ENCODE measurements at regions of chr10 and their contacts with region 1.

Region 1: DNA sequence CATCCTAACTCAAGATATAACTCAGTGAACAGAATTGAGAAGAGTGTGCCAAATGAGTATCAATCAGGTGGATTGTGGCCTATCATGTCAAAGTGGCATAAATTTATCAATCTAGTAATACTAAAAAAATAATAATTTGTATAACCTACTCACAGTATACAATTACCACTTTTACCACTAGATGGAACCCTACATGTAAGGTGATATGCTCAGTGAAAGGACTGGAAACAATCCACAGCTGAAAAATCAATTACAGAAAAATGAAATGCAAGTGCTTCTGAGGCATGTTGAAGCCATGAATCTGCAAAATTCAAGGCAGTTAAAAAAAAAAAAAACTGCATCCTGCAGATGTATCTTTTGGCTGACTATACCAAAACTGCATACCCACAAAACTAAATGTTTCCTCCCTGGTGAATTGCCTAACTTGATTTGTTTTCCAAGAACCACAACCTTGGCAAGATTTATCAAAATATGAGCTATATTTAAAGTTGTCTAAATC is 13.9 kb downstream of the ARHGAP19 start:
- DNase-seq: peak in 2 of 5 donors; percentile 32 to 49
- H3K4me3 ChIP-seq: no peak overlapping the region
- H3K4me3 Mint-ChIP-seq: no peak overlapping the region
- H3K27ac ChIP-seq: no peak overlapping the region
- H3K27ac Mint-ChIP-seq: peak overlapping the region in 1 of 8 donors; percentile 24
- H3K4me1 ChIP-seq: no peaks in the 10 kb centered on the region
- H3K4me1 Mint-ChIP-seq: peaks cover 4 to 16% (median 13%) of the 10 kb centered on the region in 3 donors
- H3K27me3 ChIP-seq: no peaks in the 10 kb centered on the region
- H3K27me3 Mint-ChIP-seq: no peaks in the 10 kb centered on the region

Region 2: GRCh38 chr10:97318772-97319651 is 40.5 kb after region 1 on chr10 and contains the start of gene FRAT1:
- CTCF ChIA-PET with region 1: interaction called, 12 read pairs
- POLR2A ChIA-PET with region 1: interaction called, 3 read pairs
- DNase-seq: peak; percentile 86 to 96 (median 94)
- H3K4me3 ChIP-seq: peak within 1 kb of the TSS; percentile 79
- H3K4me3 Mint-ChIP-seq: peak within 1 kb of the TSS; percentile 94 to 99 (median 95)
- H3K27ac ChIP-seq: peak within 1 kb of the TSS; percentile 99
- H3K27ac Mint-ChIP-seq: peak within 1 kb of the TSS; percentile 97 to 100 (median 100)
- H3K4me1 ChIP-seq: peaks cover 23% of the 10 kb centered on the region
- H3K4me1 Mint-ChIP-seq: peaks cover 27 to 34% (median 32%) of the 10 kb centered on the region in 3 donors
- H3K27me3 ChIP-seq: no peaks in the 10 kb centered on the region
- H3K27me3 Mint-ChIP-seq: peaks cover 0 to 1% of the 10 kb centered on the region in 2 donors
- total RNA-seq, gene FRAT1: 4.3 to 4.7 TPM

Region 3: GRCh38 chr10:97334370-97335175 is 56.0 kb after region 1 on chr10 and contains the start of gene FRAT2:
- CTCF ChIA-PET with region 1: interaction called, 14 read pairs
- POLR2A ChIA-PET with region 1: interaction called, 3 read pairs
- DNase-seq: peak; percentile 83 to 94 (median 90)
- H3K4me3 ChIP-seq: peak within 1 kb of the TSS; percentile 81
- H3K4me3 Mint-ChIP-seq: peak within 1 kb of the TSS; percentile 89 to 96 (median 91)
- H3K27ac ChIP-seq: peak within 1 kb of the TSS; percentile 96
- H3K27ac Mint-ChIP-seq: peak within 1 kb of the TSS; percentile 84 to 98 (median 91)
- H3K4me1 ChIP-seq: peaks cover 28% of the 10 kb centered on the region
- H3K4me1 Mint-ChIP-seq: peaks cover 31 to 46% (median 42%) of the 10 kb centered on the region in 3 donors
- H3K27me3 ChIP-seq: no peaks in the 10 kb centered on the region
- H3K27me3 Mint-ChIP-seq: peaks cover 2 to 3% of the 10 kb centered on the region in 2 donors
- total RNA-seq, gene FRAT2: 9.8 to 10.4 TPM

Region 4: GRCh38 chr10:97355571-97355975 is 77.0 kb after region 1 on chr10:
- CTCF ChIA-PET with region 1: interaction called, 17 read pairs
- POLR2A ChIA-PET with region 1: no interaction called
- DNase-seq: no peak
- H3K4me3 ChIP-seq: no peak overlapping the region
- H3K4me3 Mint-ChIP-seq: no peak overlapping the region
- H3K27ac ChIP-seq: no peak overlapping the region
- H3K27ac Mint-ChIP-seq: peak overlapping the region in 3 of 8 donors; percentile 12 to 78 (median 66)
- H3K4me1 ChIP-seq: no peaks in the 10 kb centered on the region
- H3K4me1 Mint-ChIP-seq: peaks cover 0 to 12% (median 10%) of the 10 kb centered on the region in 3 donors
- H3K27me3 ChIP-seq: no peaks in the 10 kb centered on the region
- H3K27me3 Mint-ChIP-seq: no peaks in the 10 kb centered on the region